Activated CD4-positive, alpha-beta T cell treated with anti-CD3 and anti-CD28 coated beads, Interleukin-2, amount 10 ng/mL, durations not matched to agents 24 days and 14 days (primary cell): ENCODE measurements at regions of chr3 and their contacts with region 1.

Region 1: GRCh38 chr3:197516517-197516889 is 39.3 kb downstream of the BDH1 start:
- DNase-seq: no peak
- H3K4me3 Mint-ChIP-seq: no peak overlapping the region
- H3K27ac Mint-ChIP-seq: peak overlapping the region; percentile 88
- H3K4me1 Mint-ChIP-seq: peaks cover 16% of the 10 kb centered on the region
- H3K27me3 Mint-ChIP-seq: no peaks in the 10 kb centered on the region

Region 2: GRCh38 chr3:197428117-197428801 is 88.2 kb before region 1 on chr3:
- intact Hi-C with region 1: loop called (anchors 5 kb)
- DNase-seq: peak; percentile 91
- H3K4me3 Mint-ChIP-seq: peak overlapping the region; percentile 71
- H3K27ac Mint-ChIP-seq: peak overlapping the region; percentile 92
- H3K4me1 Mint-ChIP-seq: peaks cover 55% of the 10 kb centered on the region
- H3K27me3 Mint-ChIP-seq: peaks cover 13% of the 10 kb centered on the region

Region 3: GRCh38 chr3:197501879-197502620 is 14.5 kb before region 1 on chr3:
- intact Hi-C with region 1: no loop called
- DNase-seq: peak; percentile 81
- H3K4me3 Mint-ChIP-seq: no peak overlapping the region
- H3K27ac Mint-ChIP-seq: no peak overlapping the region
- H3K4me1 Mint-ChIP-seq: no peaks in the 10 kb centered on the region
- H3K27me3 Mint-ChIP-seq: no peaks in the 10 kb centered on the region